Ascending aorta (tissue), 2 donors: ENCODE measurements at regions of chr15 and their contacts with region 1.

Region 1: DNA sequence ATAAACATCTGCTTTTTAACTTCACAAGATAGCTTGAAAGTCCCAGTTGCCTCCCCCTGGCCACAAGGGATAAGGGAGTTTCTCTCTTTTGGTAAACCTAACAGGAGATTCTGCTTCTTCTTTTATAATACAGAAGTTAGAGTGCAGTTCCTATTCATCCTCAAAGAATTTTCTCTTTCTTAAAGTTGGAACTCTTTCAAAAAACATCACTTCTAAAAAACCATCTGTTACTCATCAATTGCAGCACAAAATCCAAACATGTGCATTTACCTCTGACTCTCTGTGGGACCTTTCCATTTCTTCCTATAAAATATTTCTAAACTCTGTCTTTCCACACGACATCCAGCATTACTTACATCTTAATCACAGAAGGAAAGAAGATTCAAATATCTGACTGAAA is 5.1 kb downstream of the DPH6 start:
- DNase-seq: no peak
- H3K4me3 ChIP-seq: no peak overlapping the region
- H3K27ac ChIP-seq: peak overlapping the region in 1 of 2 donors; percentile 29
- H3K4me1 ChIP-seq: peaks cover 0 to 8% of the 10 kb centered on the region in 2 donors
- H3K27me3 ChIP-seq: no peaks in the 10 kb centered on the region
- CTCF ChIP-seq: no peak

Region 2: DNA sequence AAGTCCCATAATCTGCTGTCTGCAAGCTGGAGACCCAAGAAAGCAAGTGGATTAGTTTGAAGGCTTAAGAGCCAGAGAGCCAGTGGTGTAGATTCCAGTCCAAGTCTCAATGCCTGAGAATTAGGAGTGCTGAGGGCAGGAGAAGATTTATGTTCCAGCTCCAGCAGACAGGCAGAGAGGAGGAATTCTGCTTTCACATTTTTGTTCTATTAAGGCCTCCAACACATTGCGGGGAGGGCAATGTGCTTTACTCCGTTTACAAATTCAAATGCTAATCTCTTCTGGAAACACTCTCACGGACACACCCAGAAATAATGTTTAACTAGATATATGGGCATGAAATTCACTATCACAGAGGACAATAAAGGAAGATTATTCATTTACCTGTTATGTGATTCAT is 48.9 kb before region 1 on chr15:
- intact Hi-C with region 1: no loop called
- DNase-seq: no peak
- H3K4me3 ChIP-seq: no peak overlapping the region
- H3K27ac ChIP-seq: no peak overlapping the region
- H3K4me1 ChIP-seq: no peaks in the 10 kb centered on the region
- H3K27me3 ChIP-seq: no peaks in the 10 kb centered on the region
- CTCF ChIP-seq: no peak

Region 3: DNA sequence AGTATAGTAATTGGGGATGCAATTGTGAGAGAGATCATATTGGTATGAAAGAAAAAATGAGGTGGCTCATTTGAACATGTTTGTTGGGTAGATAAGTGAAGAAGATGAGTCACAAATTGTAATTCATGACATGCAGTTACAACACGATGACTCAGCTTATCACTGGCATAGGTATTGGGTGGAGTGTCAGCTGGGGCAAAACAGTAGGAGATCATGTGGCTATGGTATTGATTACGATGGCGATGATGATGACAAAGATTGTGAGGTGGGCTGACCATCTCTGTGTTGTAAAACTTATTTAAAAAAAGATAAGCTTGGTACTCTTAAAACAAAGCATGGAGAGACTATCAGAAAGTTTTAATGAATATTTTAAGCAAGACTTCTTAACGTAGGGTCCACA is 16.7 kb after region 1 on chr15:
- intact Hi-C with region 1: no loop called
- DNase-seq: no peak
- H3K4me3 ChIP-seq: no peak overlapping the region
- H3K27ac ChIP-seq: no peak overlapping the region
- H3K4me1 ChIP-seq: peaks cover 0 to 6% of the 10 kb centered on the region in 2 donors
- H3K27me3 ChIP-seq: no peaks in the 10 kb centered on the region
- CTCF ChIP-seq: no peak

Region 4: DNA sequence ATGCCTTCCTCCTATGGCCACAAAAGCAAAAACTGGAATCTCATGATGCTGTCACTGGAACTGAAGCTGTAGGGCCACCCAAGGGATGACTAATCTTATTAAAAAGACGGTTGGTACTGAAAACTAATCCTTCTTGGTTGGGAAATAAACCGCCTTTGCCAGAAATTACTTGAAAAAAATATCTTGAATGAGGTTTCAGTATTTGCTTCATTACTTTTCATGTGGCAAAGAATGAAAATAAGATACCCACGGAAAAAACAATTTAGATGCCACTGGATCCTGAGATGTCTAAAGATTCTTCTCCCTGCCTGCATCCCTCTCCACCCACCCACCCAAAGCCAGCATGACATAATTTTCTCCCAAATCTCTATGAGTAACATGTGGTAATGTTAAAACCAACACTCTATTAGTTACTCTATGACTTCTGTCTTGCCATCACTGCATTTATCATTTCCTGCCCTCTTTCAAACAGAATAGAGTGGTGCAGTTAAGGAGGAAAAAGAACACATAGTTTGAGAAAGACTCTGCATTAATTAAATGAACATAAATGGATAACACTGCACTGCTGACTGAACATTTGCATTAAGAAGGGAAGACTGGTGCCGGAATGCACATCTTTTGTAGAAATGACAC is 116.9 kb after region 1 on chr15:
- intact Hi-C with region 1: loop called (anchors 5 kb)
- DNase-seq: no peak
- H3K4me3 ChIP-seq: no peak overlapping the region
- H3K27ac ChIP-seq: peak overlapping the region; percentile 31 to 47
- H3K4me1 ChIP-seq: peaks cover 0 to 6% of the 10 kb centered on the region in 2 donors
- H3K27me3 ChIP-seq: no peaks in the 10 kb centered on the region
- CTCF ChIP-seq: no peak